ENCODE measurements at regions of chr12 and their contacts with region 1.

Region 1: DNA sequence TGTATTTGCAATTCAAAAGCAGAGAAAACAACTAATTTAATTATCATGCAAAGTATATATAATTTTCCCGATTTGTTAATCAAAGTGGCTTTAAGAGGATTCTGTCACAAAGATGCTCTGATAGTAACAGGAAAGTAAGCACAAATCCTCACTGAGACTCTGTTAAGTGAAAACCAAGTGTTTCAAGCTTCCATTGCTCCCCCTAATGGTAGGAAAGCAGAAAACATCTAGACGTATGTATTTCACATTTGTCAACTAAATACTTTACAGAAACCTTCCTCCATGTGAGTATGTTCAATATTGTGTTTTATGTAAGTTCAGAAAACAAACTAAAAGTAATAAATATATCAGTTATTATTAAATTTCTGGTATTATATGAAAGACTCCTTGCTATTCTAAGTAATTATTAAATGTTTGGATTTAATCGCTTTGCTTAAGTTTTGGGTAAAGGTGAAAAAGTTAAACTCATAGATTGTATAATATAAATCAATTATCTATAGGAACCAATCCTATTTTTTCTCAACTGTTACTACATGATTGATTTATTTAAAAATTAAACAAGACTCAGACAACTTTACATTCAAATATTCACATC is 1.5 kb upstream of the NTS start:
- DNase-seq: peak; percentile 73
- H3K4me3 ChIP-seq: no peak overlapping the region
- H3K27ac ChIP-seq: no peak overlapping the region
- H3K4me1 ChIP-seq: 0 out of 2 replicates have a peak, but pooled peaks cover 4% of the 10 kb centered on the region
- H3K27me3 ChIP-seq: 0 out of 2 replicates have a peak, but pooled peaks cover 4% of the 10 kb centered on the region

Region 2: DNA sequence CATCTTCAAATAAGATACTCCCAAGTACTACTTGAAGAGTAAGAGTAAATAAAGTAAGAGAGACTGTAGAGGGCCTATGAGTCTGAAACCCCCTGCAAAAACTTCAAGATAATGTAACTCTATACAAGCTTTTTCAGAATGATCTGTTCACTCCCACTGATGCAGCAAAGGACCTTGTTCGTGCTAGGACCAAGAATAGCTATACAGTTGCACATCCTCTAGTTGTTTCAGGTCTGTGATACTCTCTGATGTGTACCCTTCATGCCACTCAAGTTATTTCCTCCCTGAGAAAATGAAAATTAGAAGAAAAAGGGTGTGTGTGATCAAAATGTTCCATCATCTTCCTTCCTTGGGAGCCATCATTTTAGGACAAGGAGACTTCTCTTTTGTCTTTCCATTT is 388.2 kb before region 1 on chr12:
- in situ Hi-C with region 1: loop called (anchors 10 kb)
- DNase-seq: no peak
- H3K4me3 ChIP-seq: no peak overlapping the region
- H3K27ac ChIP-seq: no peak overlapping the region
- H3K4me1 ChIP-seq: no peaks in the 10 kb centered on the region
- H3K27me3 ChIP-seq: no peaks in the 10 kb centered on the region; the same call in none of the 2 replicates

Region 3: DNA sequence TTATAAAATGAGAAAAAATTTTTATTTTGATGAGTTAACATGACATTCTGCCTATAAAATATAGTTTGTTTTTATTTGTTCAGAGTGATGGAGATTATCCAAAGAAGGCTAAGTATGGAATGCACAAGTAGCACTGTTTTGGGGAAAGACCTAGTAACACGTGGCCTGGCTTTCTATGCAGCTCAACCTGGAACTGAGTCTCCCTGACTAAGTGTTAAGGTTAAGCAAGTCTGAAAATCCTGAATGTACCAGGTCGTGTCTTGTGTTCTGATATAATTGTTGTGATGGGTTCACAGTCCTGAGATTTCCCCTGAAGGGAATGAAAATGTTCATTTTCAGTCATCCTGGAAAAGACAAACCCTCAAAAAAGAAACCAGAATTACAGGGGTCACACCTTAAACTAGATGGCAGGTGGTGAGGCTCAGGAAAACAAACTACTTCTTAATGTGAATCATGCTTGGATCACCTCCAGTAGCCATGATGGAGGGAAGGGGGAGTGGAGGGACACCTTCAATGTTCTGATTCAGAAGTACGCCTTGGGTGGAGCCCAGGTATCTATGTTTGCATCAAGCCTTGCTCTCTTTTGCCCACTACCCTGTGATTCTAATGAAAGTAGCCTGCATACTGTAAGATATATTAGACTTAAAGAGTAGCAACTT is 355.8 kb before region 1 on chr12:
- in situ Hi-C with region 1: no loop called
- DNase-seq: no peak
- H3K4me3 ChIP-seq: no peak overlapping the region
- H3K27ac ChIP-seq: no peak overlapping the region
- H3K4me1 ChIP-seq: no peaks in the 10 kb centered on the region
- H3K27me3 ChIP-seq: no peaks in the 10 kb centered on the region; the same call in 1 of the 2 replicates

Region 4: GRCh38 chr12:86275356-86275755 is 402.8 kb after region 1 on chr12:
- in situ Hi-C with region 1: no loop called
- DNase-seq: no peak
- H3K4me3 ChIP-seq: no peak overlapping the region
- H3K27ac ChIP-seq: no peak overlapping the region
- H3K4me1 ChIP-seq: no peaks in the 10 kb centered on the region
- H3K27me3 ChIP-seq: no peaks in the 10 kb centered on the region